H1 (cell line): ENCODE measurements at regions of chr1 and their contacts with region 1.

Region 1: DNA sequence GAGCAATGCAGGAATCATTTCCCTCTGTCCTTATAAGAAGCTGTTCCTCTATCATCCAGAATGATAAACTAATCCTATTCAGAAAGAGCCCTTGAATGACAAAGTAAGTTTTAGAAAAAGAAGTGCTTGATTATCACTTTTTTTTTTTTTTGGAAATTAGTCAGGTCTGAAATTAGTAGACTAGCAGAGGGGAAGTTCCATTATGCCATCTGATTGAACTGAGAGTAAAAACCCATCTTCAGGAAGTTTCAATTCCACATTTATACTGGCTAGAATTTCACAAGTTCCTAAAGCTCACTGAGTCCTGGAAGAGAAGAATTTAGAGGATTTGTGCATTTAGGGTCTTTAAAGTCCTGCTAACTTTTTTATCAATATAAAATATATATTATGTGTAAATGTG is 128.8 kb upstream of the COA6 start:
- DNase-seq: no peak
- H3K4me3 ChIP-seq: no peak overlapping the region
- H3K27ac ChIP-seq: no peak overlapping the region
- H3K4me1 ChIP-seq: no peaks in the 10 kb centered on the region
- H3K27me3 ChIP-seq: no peaks in the 10 kb centered on the region
- CTCF ChIP-seq: no peak
- EP300 ChIP-seq: no peak
- POLR2A ChIP-seq: no peak
- RAD21 ChIP-seq: no peak

Region 2: GRCh38 chr1:234230414-234230862 is 14.0 kb before region 1 on chr1:
- CTCF ChIA-PET with region 1: interaction called, 25 read pairs
- POLR2A ChIA-PET with region 1: interaction called, 3 read pairs
- DNase-seq: no peak
- H3K4me3 ChIP-seq: no peak overlapping the region
- H3K27ac ChIP-seq: no peak overlapping the region
- H3K4me1 ChIP-seq: peaks cover 2 to 13% (median 9%) of the 10 kb centered on the region in 4 experiments
- H3K27me3 ChIP-seq: no peaks in the 10 kb centered on the region; a peak in 1 of 7 replicates
- CTCF ChIP-seq: no peak
- EP300 ChIP-seq: no peak
- POLR2A ChIP-seq: no peak
- RAD21 ChIP-seq: no peak